H1 (cell line): ENCODE measurements at regions of chr5 and their contacts with region 1.

Region 1: DNA sequence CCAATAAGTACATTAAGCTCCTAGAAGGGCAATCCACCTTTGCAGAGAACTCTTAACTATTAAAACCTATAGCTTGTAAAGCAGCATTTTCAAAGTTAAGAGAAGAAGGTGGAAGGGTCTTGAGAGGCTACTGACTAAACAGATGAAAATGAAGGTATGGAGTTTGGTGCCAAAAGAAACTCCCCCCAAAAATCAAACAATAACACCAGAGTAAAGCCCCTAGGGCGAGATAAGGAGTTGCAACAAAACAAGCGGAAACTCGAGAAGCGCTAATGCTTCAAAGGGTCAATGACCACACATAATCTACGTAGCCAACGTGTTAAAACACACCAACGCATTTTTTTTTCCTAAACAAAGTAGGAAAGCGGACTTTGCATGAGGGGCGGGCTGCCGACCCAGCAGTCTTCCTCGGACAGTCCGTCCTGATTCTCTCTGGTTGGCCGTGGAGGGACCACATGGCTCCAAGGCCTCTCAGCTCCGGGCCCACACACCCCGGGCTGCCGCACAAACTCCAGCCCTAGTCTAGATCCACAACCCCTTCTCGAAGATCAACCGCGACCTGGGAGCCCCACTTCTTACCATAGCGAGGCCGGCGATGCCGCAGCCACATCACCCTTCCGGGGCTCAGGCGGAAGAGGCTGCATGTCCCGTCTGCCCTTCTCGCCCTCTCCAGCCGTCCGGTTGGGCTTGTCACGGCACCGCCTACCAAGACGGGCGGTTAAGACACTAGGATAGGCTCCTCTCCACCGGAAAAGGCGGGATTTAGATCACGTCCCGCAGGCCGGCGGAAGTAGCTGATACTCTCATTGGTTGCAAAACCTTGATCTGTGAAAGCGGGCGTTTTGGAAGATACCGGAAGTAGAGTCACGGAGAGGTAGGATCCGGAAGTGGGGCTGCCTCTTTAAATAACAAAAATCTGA is at the starts of genes TMEM167A and XRCC4:
- DNase-seq: peak; percentile 85 to 97
- H3K4me3 ChIP-seq: peak within 1 kb of the TSS; percentile 65 to 99 (median 94)
- H3K27ac ChIP-seq: peak within 1 kb of the TSS; percentile 92
- H3K4me1 ChIP-seq: 0 out of 7 replicates have a peak, but pooled peaks cover 0 to 5% (median under 1%) of the 10 kb centered on the region in 4 experiments
- H3K27me3 ChIP-seq: no peaks in the 10 kb centered on the region
- CTCF ChIP-seq: no peak
- EP300 ChIP-seq: no peak
- POLR2A ChIP-seq: peak; percentile 94 to 97
- RAD21 ChIP-seq: no peak
- total RNA-seq, gene TMEM167A: 164 and 178 TPM in 2 replicates
- total RNA-seq, gene XRCC4: 7.3 and 8.3 TPM in 2 replicates

Region 2: DNA sequence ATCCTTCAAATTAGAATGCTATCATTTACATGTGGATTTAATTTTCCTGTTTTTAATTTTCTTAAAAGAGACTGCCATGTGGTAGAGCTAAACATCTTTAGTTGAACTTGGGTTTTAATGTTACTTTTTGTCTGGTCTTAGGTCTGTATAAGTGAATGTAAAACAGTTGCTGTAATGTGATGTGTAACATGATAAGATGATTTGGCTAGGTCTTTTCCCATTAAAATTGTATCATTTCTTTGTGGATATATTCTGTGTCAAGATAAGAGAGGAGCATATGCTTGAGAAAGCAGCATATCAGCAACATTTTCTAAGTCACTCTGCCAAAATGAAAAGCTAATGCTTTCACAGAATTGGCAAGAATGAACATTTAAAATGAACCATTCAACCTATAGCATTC is 18.3 kb before region 1 on chr5:
- CTCF ChIA-PET with region 1: interaction called, 3 read pairs
- POLR2A ChIA-PET with region 1: interaction called, 10 read pairs
- DNase-seq: no peak
- H3K4me3 ChIP-seq: no peak overlapping the region
- H3K27ac ChIP-seq: no peak overlapping the region
- H3K4me1 ChIP-seq: no peaks in the 10 kb centered on the region
- H3K27me3 ChIP-seq: no peaks in the 10 kb centered on the region
- CTCF ChIP-seq: no peak
- EP300 ChIP-seq: no peak
- POLR2A ChIP-seq: no peak
- RAD21 ChIP-seq: no peak

Region 3: GRCh38 chr5:83066548-83067110 is 10.4 kb before region 1 on chr5:
- CTCF ChIA-PET with region 1: interaction called, 3 read pairs
- POLR2A ChIA-PET with region 1: interaction called, 10 read pairs
- DNase-seq: no peak
- H3K4me3 ChIP-seq: no peak overlapping the region; a peak in 1 of 8 replicates
- H3K27ac ChIP-seq: no peak overlapping the region
- H3K4me1 ChIP-seq: peaks cover 0 to 8% (median 1%) of the 10 kb centered on the region in 4 experiments; a peak in 2 of 7 replicates
- H3K27me3 ChIP-seq: no peaks in the 10 kb centered on the region
- CTCF ChIP-seq: no peak
- EP300 ChIP-seq: no peak
- POLR2A ChIP-seq: 0 out of 3 replicates have a peak, but pooled peaks of 1 of the 2 experiments have one; percentile 16
- RAD21 ChIP-seq: no peak

Region 4: DNA sequence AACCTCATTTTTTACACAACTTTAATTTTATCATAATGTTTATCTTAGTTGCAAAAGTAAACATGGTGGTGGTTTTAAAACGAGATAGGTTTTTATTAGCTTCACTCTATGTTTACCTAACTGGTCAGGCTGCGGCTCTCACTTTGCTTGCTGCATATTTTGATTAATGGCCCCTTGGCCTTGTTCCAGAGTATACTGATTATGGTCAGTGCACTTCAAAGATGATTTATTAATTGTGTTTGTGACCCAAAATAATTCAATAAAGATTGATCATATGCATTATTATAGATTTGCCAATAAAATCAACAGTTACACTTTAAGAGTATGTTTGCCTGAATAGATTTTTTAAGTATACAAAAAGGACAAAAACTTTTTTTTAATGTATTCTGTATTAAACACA is 188.3 kb after region 1 on chr5:
- CTCF ChIA-PET with region 1: no interaction called
- POLR2A ChIA-PET with region 1: no interaction called
- DNase-seq: no peak
- H3K4me3 ChIP-seq: no peak overlapping the region
- H3K27ac ChIP-seq: no peak overlapping the region
- H3K4me1 ChIP-seq: no peaks in the 10 kb centered on the region
- H3K27me3 ChIP-seq: no peaks in the 10 kb centered on the region
- CTCF ChIP-seq: no peak
- EP300 ChIP-seq: no peak
- POLR2A ChIP-seq: no peak
- RAD21 ChIP-seq: no peak